ENCODE measurements at regions of chr17 and their contacts with region 1.

Region 1: GRCh38 chr17:58121925-58122324 is 26.3 kb upstream of the OR4D1 start:
- DNase-seq: peak; percentile 22
- ATAC-seq: no peak
- H3K4me3 ChIP-seq: no peak overlapping the region
- H3K27ac ChIP-seq: no peak overlapping the region
- H3K4me1 ChIP-seq: no peaks in the 10 kb centered on the region
- H3K27me3 ChIP-seq: no peaks in the 10 kb centered on the region
- CTCF ChIP-seq: no peak
- POLR2A ChIP-seq: no peak
- RAD21 ChIP-seq: no peak

Region 2: GRCh38 chr17:57987580-57988421 is 134.1 kb before region 1 on chr17 and contains the start of gene VEZF1:
- CTCF ChIA-PET with region 1: no interaction called
- POLR2A ChIA-PET with region 1: no interaction called
- dilution Hi-C with region 1: no loop called
- in situ Hi-C with region 1: no loop called
- intact Hi-C with region 1: no loop called
- DNase-seq: peak; percentile 44
- ATAC-seq: peak; percentile 60
- H3K4me3 ChIP-seq: peak within 1 kb of the TSS; percentile 99
- H3K27ac ChIP-seq: peak within 1 kb of the TSS; percentile 90
- H3K4me1 ChIP-seq: peaks cover 23% of the 10 kb centered on the region
- H3K27me3 ChIP-seq: no peaks in the 10 kb centered on the region
- CTCF ChIP-seq: no peak
- POLR2A ChIP-seq: no peak; the same call in none of the 2 replicates
- RAD21 ChIP-seq: no peak
- total RNA-seq, gene VEZF1: 40.3 and 42.1 TPM in 2 replicates

Region 3: GRCh38 chr17:58097384-58098088 is 24.4 kb before region 1 on chr17:
- CTCF ChIA-PET with region 1: no interaction called
- POLR2A ChIA-PET with region 1: no interaction called
- dilution Hi-C with region 1: no loop called
- in situ Hi-C with region 1: no loop called
- intact Hi-C with region 1: loop called (anchors 2 kb)
- DNase-seq: no peak
- ATAC-seq: no peak
- H3K4me3 ChIP-seq: no peak overlapping the region
- H3K27ac ChIP-seq: no peak overlapping the region
- H3K4me1 ChIP-seq: no peaks in the 10 kb centered on the region
- H3K27me3 ChIP-seq: no peaks in the 10 kb centered on the region
- CTCF ChIP-seq: no peak
- POLR2A ChIP-seq: no peak
- RAD21 ChIP-seq: no peak